Transverse colon (tissue), 4 donors: ENCODE measurements at regions of chr6 and their contacts with region 1.

Region 1: DNA sequence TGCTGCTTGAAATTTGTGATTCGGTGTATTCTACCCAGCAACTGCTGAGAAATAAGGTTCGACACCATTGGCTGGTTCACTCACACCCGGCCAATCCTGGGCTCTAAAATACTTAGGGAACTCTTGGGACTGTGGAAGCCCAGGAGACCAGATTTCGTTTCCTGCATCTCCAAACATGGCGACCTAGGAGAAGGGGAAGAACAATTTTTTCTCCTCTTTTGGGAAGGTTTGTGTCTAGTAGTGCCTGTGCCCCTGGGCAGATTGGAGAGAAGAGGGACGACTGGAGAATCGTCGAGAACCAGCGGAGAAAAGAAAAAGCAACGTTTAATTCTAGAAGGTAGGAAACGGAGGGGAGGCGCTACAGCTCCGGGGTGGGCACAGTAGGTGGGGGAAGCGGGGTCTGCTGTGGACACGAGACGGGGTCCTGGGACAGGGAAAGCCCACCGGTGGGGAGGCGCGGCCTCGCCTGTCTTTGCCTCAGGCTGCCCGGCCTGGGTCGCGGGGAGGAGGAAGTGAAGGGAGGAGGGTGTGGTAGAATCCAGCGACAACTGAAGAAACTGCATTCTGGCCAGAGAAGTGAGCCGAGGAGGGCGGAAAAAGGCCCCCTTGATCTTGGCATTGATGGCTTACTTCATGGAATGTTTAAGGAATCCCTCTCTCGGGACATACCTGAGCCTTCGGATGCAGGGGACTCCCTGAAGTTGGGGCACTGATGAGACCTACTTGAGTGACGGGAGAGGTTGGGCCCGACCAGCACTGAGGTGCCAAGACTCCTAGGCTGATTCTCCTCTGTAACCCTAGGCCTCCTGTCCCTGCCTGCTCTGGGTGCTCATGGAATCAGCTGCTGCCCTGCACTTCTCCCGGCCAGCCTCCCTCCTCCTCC is at the start of gene BTN2A1:
- DNase-seq: peak; percentile 81
- H3K4me3 ChIP-seq: peak within 1 kb of the TSS; percentile 79 to 98 (median 96)
- H3K27ac ChIP-seq: peak within 1 kb of the TSS; percentile 95 to 98 (median 98)
- H3K4me1 ChIP-seq: peaks cover 28 to 48% (median 34%) of the 10 kb centered on the region in 4 donors
- H3K27me3 ChIP-seq: no peaks in the 10 kb centered on the region
- CTCF ChIP-seq: no peak
- EP300 ChIP-seq: no peak
- POLR2A ChIP-seq: peak; percentile 63
- total RNA-seq, gene BTN2A1: 15.3 to 35.8 (median 20.7) TPM

Region 2: GRCh38 chr6:26351544-26351953 is 106.5 kb before region 1 on chr6:
- in situ Hi-C with region 1: loop called in 1 of 4 experiments (anchors 25 kb)
- intact Hi-C with region 1: no loop called
- DNase-seq: no peak
- H3K4me3 ChIP-seq: no peak overlapping the region
- H3K27ac ChIP-seq: no peak overlapping the region
- H3K4me1 ChIP-seq: no peaks in the 10 kb centered on the region
- H3K27me3 ChIP-seq: no peaks in the 10 kb centered on the region
- CTCF ChIP-seq: no peak
- EP300 ChIP-seq: no peak
- POLR2A ChIP-seq: no peak